ENCODE measurements at regions of chr9 and their contacts with region 1.

Region 1: GRCh38 chr9:114681594-114682332 is at the start of gene TEX48:
- DNase-seq: peak; percentile 74
- ATAC-seq: peak; percentile 58
- H3K4me3 ChIP-seq: no peak within 1 kb of the TSS
- H3K27ac ChIP-seq: no peak within 1 kb of the TSS
- H3K4me1 ChIP-seq: peaks cover 9% of the 10 kb centered on the region
- H3K27me3 ChIP-seq: no peaks in the 10 kb centered on the region
- CTCF ChIP-seq: peak; percentile 70
- POLR2A ChIP-seq: no peak
- RAD21 ChIP-seq: peak; percentile 75
- total RNA-seq, gene TEX48: not detected in 2 replicates

Region 2: GRCh38 chr9:114465903-114466530 is 215.7 kb before region 1 on chr9:
- CTCF ChIA-PET with region 1: no interaction called
- POLR2A ChIA-PET with region 1: no interaction called
- dilution Hi-C with region 1: no loop called
- in situ Hi-C with region 1: no loop called
- intact Hi-C with region 1: no loop called
- DNase-seq: no peak
- ATAC-seq: no peak
- H3K4me3 ChIP-seq: no peak overlapping the region
- H3K27ac ChIP-seq: no peak overlapping the region
- H3K4me1 ChIP-seq: no peaks in the 10 kb centered on the region
- H3K27me3 ChIP-seq: peaks cover 2% of the 10 kb centered on the region; the same call in 1 of the 2 replicates
- CTCF ChIP-seq: no peak
- POLR2A ChIP-seq: no peak
- RAD21 ChIP-seq: no peak

Region 3: DNA sequence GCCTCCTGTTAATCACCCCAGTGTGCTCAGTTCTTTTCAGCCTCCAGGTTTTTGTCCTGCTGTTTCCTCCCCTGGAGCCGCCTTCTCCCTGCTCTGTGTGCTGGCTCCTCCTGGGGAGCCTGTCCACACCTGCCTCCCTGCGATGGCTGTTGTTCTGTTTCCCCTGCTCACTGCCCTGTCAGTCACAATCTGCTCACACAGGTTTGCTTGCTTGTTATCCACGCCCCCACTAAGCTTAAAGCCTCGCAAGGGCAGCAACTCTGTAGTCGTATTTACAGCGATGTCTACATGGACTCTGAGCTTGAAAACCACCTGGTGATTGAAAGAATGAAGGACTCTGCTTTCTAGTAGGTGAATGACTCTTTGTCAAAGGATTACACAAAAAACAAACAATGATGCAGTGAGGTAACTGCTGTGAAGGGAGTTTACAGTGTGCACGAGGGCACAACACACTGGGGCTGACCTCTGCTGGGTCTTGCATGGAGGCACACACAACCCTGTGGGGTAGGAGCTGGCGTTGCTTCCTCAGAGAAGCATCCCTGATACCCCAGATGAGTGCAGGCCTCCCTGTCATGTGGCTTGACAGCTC is 39.8 kb after region 1 on chr9:
- CTCF ChIA-PET with region 1: interaction called, 6 read pairs
- POLR2A ChIA-PET with region 1: no interaction called
- dilution Hi-C with region 1: no loop called
- in situ Hi-C with region 1: no loop called
- intact Hi-C with region 1: loop called (anchors 5 kb)
- DNase-seq: no peak
- ATAC-seq: no peak
- H3K4me3 ChIP-seq: no peak overlapping the region
- H3K27ac ChIP-seq: no peak overlapping the region
- H3K4me1 ChIP-seq: peaks cover 19% of the 10 kb centered on the region
- H3K27me3 ChIP-seq: peaks cover 42% of the 10 kb centered on the region
- CTCF ChIP-seq: no peak
- POLR2A ChIP-seq: no peak
- RAD21 ChIP-seq: no peak

Measured in IMR-90 (cell line).